CD4-positive, alpha-beta T cell (primary cell): ENCODE measurements at regions of chr5 and their contacts with region 1.

Region 1: GRCh38 chr5:113513384-113514288 is at the start of gene YTHDC2:
- DNase-seq: peak; percentile 76 to 95 (median 84)
- ATAC-seq: peak; percentile 95
- H3K4me3 ChIP-seq: peak within 1 kb of the TSS; percentile 70
- H3K4me3 Mint-ChIP-seq: peak within 1 kb of the TSS; percentile 90
- H3K27ac ChIP-seq: peak within 1 kb of the TSS; percentile 71 to 74
- H3K27ac Mint-ChIP-seq: peak within 1 kb of the TSS; percentile 85
- H3K4me1 ChIP-seq: peaks cover 9% of the 10 kb centered on the region
- H3K4me1 Mint-ChIP-seq: peaks cover 42% of the 10 kb centered on the region
- H3K27me3 ChIP-seq: peaks cover 0 to 10% of the 10 kb centered on the region in 2 experiments
- H3K27me3 Mint-ChIP-seq: peaks cover 23% of the 10 kb centered on the region
- CTCF ChIP-seq: peak; percentile 24
- total RNA-seq, gene YTHDC2: 33.9 to 41.7 TPM

Region 2: GRCh38 chr5:112160652-112161391 is 1352.8 kb before region 1 on chr5:
- CTCF ChIA-PET with region 1: no interaction called
- POLR2A ChIA-PET with region 1: interaction called, 3 read pairs
- intact Hi-C with region 1: loop called in 1 of 2 experiments (anchors 10 kb)
- DNase-seq: peak; percentile 85 to 96 (median 91)
- ATAC-seq: peak; percentile 96
- H3K4me3 ChIP-seq: peak overlapping the region; percentile 94
- H3K4me3 Mint-ChIP-seq: peak overlapping the region; percentile 91
- H3K27ac ChIP-seq: peak overlapping the region; percentile 70 to 72
- H3K27ac Mint-ChIP-seq: peak overlapping the region; percentile 73
- H3K4me1 ChIP-seq: peaks cover 16% of the 10 kb centered on the region
- H3K4me1 Mint-ChIP-seq: peaks cover 21% of the 10 kb centered on the region
- H3K27me3 ChIP-seq: no peaks in the 10 kb centered on the region
- H3K27me3 Mint-ChIP-seq: no peaks in the 10 kb centered on the region
- CTCF ChIP-seq: peak; percentile 96

Region 3: GRCh38 chr5:112976432-112977309 is 537.0 kb before region 1 on chr5 and contains the start of gene DCP2:
- CTCF ChIA-PET with region 1: interaction called, 3 read pairs
- POLR2A ChIA-PET with region 1: interaction called, 19 read pairs
- intact Hi-C with region 1: loop called (anchors 5 kb)
- DNase-seq: peak; percentile 87 to 99 (median 94)
- ATAC-seq: peak; percentile 93
- H3K4me3 ChIP-seq: peak within 1 kb of the TSS; percentile 92
- H3K4me3 Mint-ChIP-seq: peak within 1 kb of the TSS; percentile 100
- H3K27ac ChIP-seq: peak within 1 kb of the TSS; percentile 72 to 78
- H3K27ac Mint-ChIP-seq: peak within 1 kb of the TSS; percentile 96
- H3K4me1 ChIP-seq: peaks cover 15% of the 10 kb centered on the region
- H3K4me1 Mint-ChIP-seq: peaks cover 56% of the 10 kb centered on the region
- H3K27me3 ChIP-seq: no peaks in the 10 kb centered on the region
- H3K27me3 Mint-ChIP-seq: no peaks in the 10 kb centered on the region
- CTCF ChIP-seq: no peak
- total RNA-seq, gene DCP2: 86.3 to 87.1 TPM

Region 4: DNA sequence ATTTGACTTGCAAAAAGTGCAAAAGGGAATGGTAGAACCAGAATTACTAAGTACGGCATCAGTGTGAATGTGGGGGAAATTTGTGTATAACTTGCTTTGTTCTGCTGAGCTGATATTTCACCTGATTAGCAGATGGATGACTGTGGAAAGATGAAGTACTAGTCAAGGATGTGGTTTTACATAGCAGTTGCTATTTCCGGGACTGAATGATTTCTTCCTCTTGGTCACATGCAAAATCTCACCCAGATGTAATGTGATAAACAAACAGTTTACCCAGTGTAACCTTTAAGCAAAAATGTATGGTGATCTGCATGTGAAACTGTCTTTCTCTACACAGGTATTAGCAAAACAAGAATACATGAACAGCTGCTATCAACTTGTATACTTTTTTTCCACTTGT is 491.0 kb before region 1 on chr5:
- CTCF ChIA-PET with region 1: no interaction called
- POLR2A ChIA-PET with region 1: interaction called, 3 read pairs
- intact Hi-C with region 1: loop called in 1 of 2 experiments (anchors 10 kb)
- DNase-seq: peak in 4 of 14 experiments; percentile 1 to 87 (median 78)
- ATAC-seq: peak; percentile 86
- H3K4me3 ChIP-seq: no peak overlapping the region
- H3K4me3 Mint-ChIP-seq: peak overlapping the region; percentile 57
- H3K27ac ChIP-seq: peak overlapping the region; percentile 18 to 71
- H3K27ac Mint-ChIP-seq: peak overlapping the region; percentile 87
- H3K4me1 ChIP-seq: peaks cover 20% of the 10 kb centered on the region
- H3K4me1 Mint-ChIP-seq: peaks cover 77% of the 10 kb centered on the region
- H3K27me3 ChIP-seq: no peaks in the 10 kb centered on the region
- H3K27me3 Mint-ChIP-seq: no peaks in the 10 kb centered on the region
- CTCF ChIP-seq: no peak

Region 5: DNA sequence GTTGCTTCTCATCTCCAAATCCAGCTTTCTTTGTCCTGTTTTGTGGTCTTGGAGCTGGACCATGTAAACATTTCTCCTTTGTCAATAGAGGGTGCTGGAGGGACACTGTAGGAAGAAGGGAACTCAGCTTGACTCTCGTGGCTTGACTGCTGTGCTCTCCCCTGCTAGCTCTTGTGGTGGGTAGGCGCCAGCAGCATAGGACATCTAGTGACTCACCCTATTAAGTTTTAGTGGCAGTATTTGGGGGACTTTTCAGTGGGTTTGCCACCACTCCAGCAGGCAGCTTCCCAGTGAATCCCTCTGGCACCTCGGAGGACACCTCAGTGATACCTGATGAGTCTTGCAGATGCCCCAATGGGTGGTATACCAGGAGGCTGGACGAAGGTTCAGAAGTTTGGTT is 176.7 kb before region 1 on chr5:
- CTCF ChIA-PET with region 1: interaction called, 4 read pairs
- POLR2A ChIA-PET with region 1: no interaction called
- intact Hi-C with region 1: loop called (anchors 2 to 5 kb)
- DNase-seq: peak in 3 of 14 experiments; percentile 17 to 26 (median 19)
- ATAC-seq: no peak
- H3K4me3 ChIP-seq: no peak overlapping the region
- H3K4me3 Mint-ChIP-seq: no peak overlapping the region
- H3K27ac ChIP-seq: no peak overlapping the region
- H3K27ac Mint-ChIP-seq: no peak overlapping the region
- H3K4me1 ChIP-seq: no peaks in the 10 kb centered on the region
- H3K4me1 Mint-ChIP-seq: peaks cover 13% of the 10 kb centered on the region
- H3K27me3 ChIP-seq: no peaks in the 10 kb centered on the region
- H3K27me3 Mint-ChIP-seq: peaks cover 17% of the 10 kb centered on the region
- CTCF ChIP-seq: no peak

Region 6: DNA sequence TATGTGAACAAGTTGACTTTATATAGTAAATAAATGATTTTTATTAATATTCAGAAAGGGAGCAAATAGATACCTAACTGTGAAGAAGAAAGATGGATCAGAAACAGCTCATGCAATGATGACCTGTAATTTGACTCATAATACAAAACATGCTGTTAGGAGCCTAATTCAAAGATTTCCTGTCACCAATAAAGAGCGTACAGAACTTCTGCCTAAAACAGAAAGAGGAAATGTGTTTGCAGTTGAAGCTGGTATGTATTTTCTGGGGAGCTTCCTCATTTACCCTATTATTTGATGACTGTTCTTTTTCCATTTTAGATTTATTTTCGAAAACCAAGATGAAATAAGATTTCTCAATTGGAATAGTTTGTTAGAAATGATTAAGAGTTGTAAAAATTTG is 11.3 kb after region 1 on chr5:
- CTCF ChIA-PET with region 1: no interaction called
- POLR2A ChIA-PET with region 1: interaction called, 19 read pairs
- intact Hi-C with region 1: no loop called
- DNase-seq: peak in 3 of 14 experiments; percentile 45 to 53 (median 51)
- ATAC-seq: peak; percentile 74
- H3K4me3 ChIP-seq: no peak overlapping the region
- H3K4me3 Mint-ChIP-seq: peak overlapping the region; percentile 2
- H3K27ac ChIP-seq: no peak overlapping the region
- H3K27ac Mint-ChIP-seq: no peak overlapping the region
- H3K4me1 ChIP-seq: peaks cover 2% of the 10 kb centered on the region
- H3K4me1 Mint-ChIP-seq: peaks cover 63% of the 10 kb centered on the region
- H3K27me3 ChIP-seq: no peaks in the 10 kb centered on the region
- H3K27me3 Mint-ChIP-seq: no peaks in the 10 kb centered on the region
- CTCF ChIP-seq: no peak

Region 7: GRCh38 chr5:113652161-113652560 is 138.5 kb after region 1 on chr5:
- CTCF ChIA-PET with region 1: no interaction called
- POLR2A ChIA-PET with region 1: no interaction called
- intact Hi-C with region 1: no loop called
- DNase-seq: no peak
- ATAC-seq: no peak
- H3K4me3 ChIP-seq: no peak overlapping the region
- H3K4me3 Mint-ChIP-seq: no peak overlapping the region
- H3K27ac ChIP-seq: no peak overlapping the region
- H3K27ac Mint-ChIP-seq: no peak overlapping the region
- H3K4me1 ChIP-seq: no peaks in the 10 kb centered on the region
- H3K4me1 Mint-ChIP-seq: no peaks in the 10 kb centered on the region
- H3K27me3 ChIP-seq: no peaks in the 10 kb centered on the region
- H3K27me3 Mint-ChIP-seq: peaks cover 16% of the 10 kb centered on the region
- CTCF ChIP-seq: no peak